ENCODE measurements at regions of chr15 and their contacts with region 1.

Region 1: DNA sequence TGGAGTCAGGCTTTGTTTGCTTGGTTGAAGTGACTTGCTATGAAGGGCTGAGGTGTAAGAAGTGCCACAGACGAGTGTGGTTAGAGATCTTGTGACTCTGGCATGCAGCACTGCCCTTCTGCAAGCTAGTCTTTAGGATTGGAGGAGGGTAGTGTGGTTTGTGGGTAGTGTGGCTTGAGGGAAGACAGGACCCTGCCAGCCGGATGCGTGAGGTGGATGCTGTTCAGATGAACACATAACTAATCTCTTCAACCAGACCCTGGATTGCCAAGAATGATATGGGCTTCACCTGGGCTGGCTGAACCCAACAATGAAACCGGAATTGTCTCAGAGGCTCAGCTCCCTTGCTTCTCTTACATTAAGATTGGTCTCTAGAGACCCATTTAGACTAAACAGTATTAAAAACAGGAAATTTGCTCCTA is 32.7 kb downstream of the STARD9 start:
- DNase-seq: peak in 13 of 14 experiments; percentile 1 to 64 (median 9)
- ATAC-seq: peak; percentile 43
- H3K4me3 ChIP-seq: no peak overlapping the region
- H3K4me3 Mint-ChIP-seq: peak overlapping the region; percentile 74
- H3K27ac ChIP-seq: no peak overlapping the region
- H3K27ac Mint-ChIP-seq: peak overlapping the region; percentile 25
- H3K4me1 ChIP-seq: peaks cover 37% of the 10 kb centered on the region
- H3K4me1 Mint-ChIP-seq: peaks cover 49% of the 10 kb centered on the region
- H3K27me3 ChIP-seq: no peaks in the 10 kb centered on the region
- H3K27me3 Mint-ChIP-seq: no peaks in the 10 kb centered on the region
- CTCF ChIP-seq: no peak

Region 2: DNA sequence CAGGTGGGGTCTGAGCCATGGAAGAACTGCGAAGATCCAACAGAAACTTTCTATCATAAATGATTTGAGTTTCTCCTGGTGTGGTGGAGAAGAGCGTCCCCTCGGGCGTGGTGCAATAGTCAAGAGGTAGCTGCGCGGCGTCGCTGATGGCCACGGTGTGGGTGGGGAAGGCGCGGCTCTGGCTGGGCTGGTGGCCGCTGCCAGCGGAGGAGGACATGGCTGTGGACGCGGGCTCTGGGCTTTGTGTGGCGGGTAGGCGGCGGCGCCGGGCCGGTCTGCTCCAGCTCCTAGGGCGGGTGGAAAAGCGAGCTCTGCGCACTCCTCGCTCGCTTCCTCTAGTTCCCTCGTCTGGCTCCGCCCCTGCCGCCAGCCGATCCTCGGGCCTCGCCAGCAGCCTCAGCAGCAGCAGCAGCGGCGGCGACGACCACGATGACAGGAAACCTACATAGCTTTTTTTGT is 26.8 kb before region 1 on chr15:
- CTCF ChIA-PET with region 1: no interaction called
- POLR2A ChIA-PET with region 1: interaction called, 25 read pairs
- intact Hi-C with region 1: no loop called
- DNase-seq: peak; percentile 60 to 89 (median 78)
- ATAC-seq: peak; percentile 100
- H3K4me3 ChIP-seq: peak overlapping the region; percentile 62
- H3K4me3 Mint-ChIP-seq: peak overlapping the region; percentile 87
- H3K27ac ChIP-seq: peak overlapping the region; percentile 47 to 67
- H3K27ac Mint-ChIP-seq: peak overlapping the region; percentile 86
- H3K4me1 ChIP-seq: peaks cover 18% of the 10 kb centered on the region
- H3K4me1 Mint-ChIP-seq: peaks cover 40% of the 10 kb centered on the region
- H3K27me3 ChIP-seq: no peaks in the 10 kb centered on the region
- H3K27me3 Mint-ChIP-seq: peaks cover 13% of the 10 kb centered on the region
- CTCF ChIP-seq: no peak

Measured in CD4-positive, alpha-beta T cell (primary cell).